ENCODE measurements at regions of chr17 and their contacts with region 1.

Region 1: DNA sequence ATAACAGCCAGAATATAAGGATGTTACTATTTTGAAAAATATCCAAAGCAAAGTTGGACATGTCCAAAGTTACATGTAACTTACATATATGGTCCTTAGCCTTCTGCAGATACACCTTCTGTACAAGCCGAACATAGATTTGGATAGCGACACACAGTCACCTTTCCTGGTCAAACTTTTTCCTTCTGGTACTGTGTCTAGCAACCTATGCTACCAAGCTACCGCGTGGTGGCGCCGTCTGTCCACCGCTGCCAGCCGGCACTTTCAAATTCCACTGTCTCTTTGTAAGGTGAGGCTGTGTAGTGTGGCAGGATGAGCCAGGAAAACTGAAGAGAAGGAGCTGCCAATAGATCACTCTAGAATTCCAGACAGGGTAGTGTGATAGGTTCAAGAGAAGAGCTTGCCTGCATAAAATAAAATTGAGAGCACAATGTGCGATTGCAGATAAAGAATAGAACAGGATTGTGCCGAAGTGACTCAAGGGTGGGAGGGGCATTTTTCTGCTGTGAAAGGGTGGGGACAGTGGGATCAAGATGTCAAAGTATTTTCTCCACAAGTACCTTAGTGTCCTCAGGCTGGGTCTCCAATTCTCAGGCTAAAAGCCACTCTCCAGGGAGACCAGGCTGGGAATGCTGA is 366.9 kb downstream of the SLC39A11 start:
- DNase-seq: peak; percentile 60
- H3K4me3 ChIP-seq: no peak overlapping the region
- H3K27ac ChIP-seq: no peak overlapping the region
- H3K4me1 ChIP-seq: no peaks in the 10 kb centered on the region
- H3K27me3 ChIP-seq: no peaks in the 10 kb centered on the region
- CTCF ChIP-seq: peak; percentile 89

Region 2: GRCh38 chr17:72952220-72952984 is 226.9 kb after region 1 on chr17:
- CTCF ChIA-PET with region 1: interaction called, 3 read pairs
- POLR2A ChIA-PET with region 1: interaction called, 26 read pairs
- intact Hi-C with region 1: no loop called
- DNase-seq: no peak
- H3K4me3 ChIP-seq: no peak overlapping the region
- H3K27ac ChIP-seq: no peak overlapping the region
- H3K4me1 ChIP-seq: peaks cover 25% of the 10 kb centered on the region
- H3K27me3 ChIP-seq: no peaks in the 10 kb centered on the region
- CTCF ChIP-seq: no peak

Region 3: GRCh38 chr17:73156166-73156840 is 430.8 kb after region 1 on chr17:
- CTCF ChIA-PET with region 1: interaction called, 14 read pairs
- POLR2A ChIA-PET with region 1: no interaction called
- intact Hi-C with region 1: loop called (anchors 2 kb)
- DNase-seq: peak; percentile 79
- H3K4me3 ChIP-seq: no peak overlapping the region
- H3K27ac ChIP-seq: no peak overlapping the region
- H3K4me1 ChIP-seq: peaks cover 14% of the 10 kb centered on the region
- H3K27me3 ChIP-seq: peaks cover 3% of the 10 kb centered on the region
- CTCF ChIP-seq: peak; percentile 84

Region 4: DNA sequence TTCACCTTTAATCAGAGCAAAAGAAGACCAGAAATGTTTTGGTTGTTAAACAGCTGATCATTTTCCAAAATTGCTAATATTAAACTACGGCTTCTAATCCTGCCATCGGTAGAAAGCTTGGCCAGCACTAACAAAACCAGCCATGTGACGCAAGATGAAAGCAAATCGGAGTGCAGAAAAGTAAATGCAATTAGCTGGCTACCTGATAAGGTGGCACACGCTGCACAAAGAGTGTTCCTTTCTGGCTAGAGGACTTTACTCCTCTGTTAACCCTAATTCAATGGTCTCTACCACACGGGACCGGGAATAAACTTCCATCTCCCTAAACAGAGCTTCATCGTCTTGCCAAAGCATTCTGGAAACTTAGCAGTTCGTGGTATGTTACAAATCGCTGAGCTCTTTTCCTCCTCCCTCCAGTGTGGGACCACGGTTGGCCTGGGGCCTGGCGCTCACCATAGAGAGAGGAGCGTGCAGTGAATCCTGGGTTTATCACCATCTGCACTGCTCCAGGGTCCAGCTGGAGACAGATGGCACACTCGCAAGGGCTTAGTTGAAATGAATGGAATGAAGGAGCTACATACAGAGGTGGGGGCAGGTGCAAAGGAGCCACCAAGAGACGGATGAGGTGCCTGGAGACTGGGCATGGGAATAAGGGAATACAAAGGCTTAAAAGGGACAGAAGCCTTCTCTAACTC is 457.2 kb after region 1 on chr17:
- CTCF ChIA-PET with region 1: no interaction called
- POLR2A ChIA-PET with region 1: no interaction called
- intact Hi-C with region 1: no loop called
- DNase-seq: no peak
- H3K4me3 ChIP-seq: no peak overlapping the region
- H3K27ac ChIP-seq: no peak overlapping the region
- H3K4me1 ChIP-seq: no peaks in the 10 kb centered on the region
- H3K27me3 ChIP-seq: no peaks in the 10 kb centered on the region
- CTCF ChIP-seq: no peak

Region 5: DNA sequence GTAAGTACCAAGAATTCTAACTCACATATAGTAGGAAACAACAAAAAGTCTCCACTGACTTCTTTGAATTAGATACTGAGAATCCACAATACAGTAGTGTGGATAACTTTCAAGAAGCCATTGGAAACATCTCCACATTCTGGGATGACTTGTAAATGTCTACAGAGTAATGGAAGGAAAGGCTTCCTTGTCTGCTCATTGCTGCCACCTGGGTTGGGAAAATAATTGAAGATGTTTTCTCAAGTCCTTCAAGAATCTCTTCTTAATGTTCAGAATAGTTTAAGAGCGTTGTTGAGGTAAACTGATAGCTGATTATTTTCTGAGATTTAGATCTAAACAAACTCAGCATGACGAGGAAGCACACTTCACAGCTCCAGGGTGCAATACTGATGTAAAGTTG is 522.2 kb after region 1 on chr17:
- CTCF ChIA-PET with region 1: no interaction called
- POLR2A ChIA-PET with region 1: no interaction called
- intact Hi-C with region 1: loop called (anchors 5 kb)
- DNase-seq: no peak
- H3K4me3 ChIP-seq: no peak overlapping the region
- H3K27ac ChIP-seq: no peak overlapping the region
- H3K4me1 ChIP-seq: no peaks in the 10 kb centered on the region
- H3K27me3 ChIP-seq: no peaks in the 10 kb centered on the region
- CTCF ChIP-seq: peak; percentile 25; the same call in 1 of the 2 replicates

Measured in A673 (cell line).